ENCODE measurements at regions of chr17 and their contacts with region 1.

Region 1: GRCh38 chr17:82358465-82359350 is at the start of gene TEX19:
- DNase-seq: no peak
- ATAC-seq: no peak
- total RNA-seq, gene TEX19: not detected

Region 2: GRCh38 chr17:82302991-82303943 is 55.4 kb before region 1 on chr17:
- intact Hi-C with region 1: no loop called
- DNase-seq: peak in 1 of 2 donors; percentile 15
- ATAC-seq: no peak

Region 3: DNA sequence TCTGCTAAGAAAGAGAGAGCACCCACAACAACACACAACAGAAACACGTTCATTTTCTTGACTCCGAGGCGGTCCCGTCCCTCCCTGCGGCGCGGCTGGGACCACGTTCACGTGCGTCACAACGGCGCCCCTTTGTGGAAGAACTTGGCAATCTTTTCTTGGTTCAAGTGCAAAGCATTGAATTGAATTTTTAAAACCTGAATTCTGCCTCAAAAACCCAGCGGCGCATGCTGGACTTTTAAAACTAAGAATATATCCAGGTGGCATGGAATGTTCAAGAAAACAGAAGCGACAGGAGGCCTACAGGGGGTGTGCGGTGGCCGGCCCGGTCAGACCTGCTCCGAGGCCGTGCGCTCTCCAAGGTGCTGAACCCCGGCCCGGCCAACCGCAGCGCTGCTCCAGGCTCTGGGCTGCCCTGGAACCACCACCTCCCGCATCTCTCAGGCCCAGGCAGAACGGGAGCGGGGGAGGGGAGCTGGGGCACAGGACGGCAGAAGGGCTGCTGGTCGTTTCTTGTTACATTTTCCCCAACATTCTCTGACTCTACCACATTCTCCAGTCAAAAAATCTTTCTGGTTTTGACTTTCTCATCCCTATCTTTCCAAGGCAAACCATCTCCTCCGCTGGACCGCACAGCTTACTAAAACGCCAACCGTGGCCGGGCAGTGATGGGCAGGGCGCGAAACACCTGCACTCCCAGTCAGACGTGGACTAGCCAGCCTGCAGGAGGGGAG is 56.0 kb after region 1 on chr17:
- intact Hi-C with region 1: loop called (anchors 5 kb)
- DNase-seq: peak; percentile 56 to 83
- ATAC-seq: peak; percentile 48